H1 (cell line): ENCODE measurements at regions of chr15 and their contacts with region 1.

Region 1: DNA sequence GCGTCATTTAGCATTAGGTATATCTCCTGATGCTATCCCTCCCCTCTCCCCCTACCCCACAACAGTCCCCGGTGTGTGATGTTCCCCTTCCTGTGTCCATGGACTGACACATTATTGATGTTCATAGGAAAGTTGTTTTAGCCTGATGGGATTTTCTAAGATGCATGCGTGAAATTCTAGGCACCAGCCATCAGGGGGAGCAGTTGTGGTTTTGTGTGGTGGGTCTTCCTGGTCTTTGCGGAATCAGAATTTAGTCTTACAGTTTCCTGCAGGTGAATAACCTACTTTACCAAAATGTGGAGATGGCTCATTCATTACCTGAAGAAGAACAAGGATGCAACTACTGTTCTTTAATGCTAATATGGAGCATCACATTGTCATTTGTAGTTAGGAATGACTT is 455.0 kb upstream of the THBS1 start:
- DNase-seq: peak in 1 of 2 experiments; percentile 54
- H3K4me3 ChIP-seq: no peak overlapping the region
- H3K27ac ChIP-seq: no peak overlapping the region
- H3K4me1 ChIP-seq: peaks cover 0 to 6% (median 3%) of the 10 kb centered on the region in 4 experiments; a peak in 5 of 7 replicates
- H3K27me3 ChIP-seq: no peaks in the 10 kb centered on the region
- CTCF ChIP-seq: peak; percentile 53 to 81 (median 59)
- EP300 ChIP-seq: no peak
- POLR2A ChIP-seq: no peak
- RAD21 ChIP-seq: peak; percentile 75 to 78

Region 2: DNA sequence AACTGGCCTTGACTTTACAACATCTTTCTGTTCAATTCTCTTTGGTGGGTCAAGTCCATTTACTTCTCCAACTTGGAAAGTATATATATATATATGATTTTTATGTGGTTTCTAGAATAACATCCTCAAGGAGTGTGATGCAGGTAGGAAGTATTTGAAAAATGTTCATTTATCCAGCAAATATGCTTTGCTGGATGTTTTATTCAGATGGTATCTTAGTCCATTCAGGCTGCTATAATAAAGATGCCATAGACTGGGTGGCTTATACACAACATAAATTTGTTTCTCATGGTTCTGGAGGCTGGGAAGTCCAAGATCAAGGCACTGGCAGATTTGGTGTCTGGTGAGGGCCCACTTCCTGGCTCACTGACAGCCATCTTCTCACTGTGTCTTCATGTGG is 392.6 kb before region 1 on chr15:
- CTCF ChIA-PET with region 1: no interaction called
- POLR2A ChIA-PET with region 1: no interaction called
- DNase-seq: no peak
- H3K4me3 ChIP-seq: no peak overlapping the region
- H3K27ac ChIP-seq: no peak overlapping the region
- H3K4me1 ChIP-seq: no peaks in the 10 kb centered on the region
- H3K27me3 ChIP-seq: no peaks in the 10 kb centered on the region
- CTCF ChIP-seq: no peak
- EP300 ChIP-seq: no peak
- POLR2A ChIP-seq: no peak
- RAD21 ChIP-seq: no peak

Region 3: GRCh38 chr15:38905634-38906033 is 220.3 kb before region 1 on chr15:
- CTCF ChIA-PET with region 1: no interaction called
- POLR2A ChIA-PET with region 1: no interaction called
- DNase-seq: no peak
- H3K4me3 ChIP-seq: no peak overlapping the region
- H3K27ac ChIP-seq: no peak overlapping the region
- H3K4me1 ChIP-seq: no peaks in the 10 kb centered on the region; a peak in 1 of 7 replicates
- H3K27me3 ChIP-seq: no peaks in the 10 kb centered on the region
- CTCF ChIP-seq: no peak
- EP300 ChIP-seq: no peak
- POLR2A ChIP-seq: no peak
- RAD21 ChIP-seq: no peak

Region 4: GRCh38 chr15:39140060-39140604 is 14.2 kb after region 1 on chr15:
- CTCF ChIA-PET with region 1: interaction called, 12 read pairs
- POLR2A ChIA-PET with region 1: interaction called, 3 read pairs
- DNase-seq: no peak
- H3K4me3 ChIP-seq: no peak overlapping the region
- H3K27ac ChIP-seq: no peak overlapping the region
- H3K4me1 ChIP-seq: no peaks in the 10 kb centered on the region
- H3K27me3 ChIP-seq: no peaks in the 10 kb centered on the region
- CTCF ChIP-seq: no peak
- EP300 ChIP-seq: no peak
- POLR2A ChIP-seq: no peak
- RAD21 ChIP-seq: no peak

Region 5: GRCh38 chr15:39154227-39154638 is 28.3 kb after region 1 on chr15:
- CTCF ChIA-PET with region 1: interaction called, 10 read pairs
- POLR2A ChIA-PET with region 1: no interaction called
- DNase-seq: no peak
- H3K4me3 ChIP-seq: no peak overlapping the region
- H3K27ac ChIP-seq: no peak overlapping the region
- H3K4me1 ChIP-seq: peaks cover 0 to 3% (median 0%) of the 10 kb centered on the region in 4 experiments; a peak in 1 of 7 replicates
- H3K27me3 ChIP-seq: no peaks in the 10 kb centered on the region
- CTCF ChIP-seq: peak in 1 of 3 experiments; percentile 32; a peak in 1 of 4 replicates
- EP300 ChIP-seq: no peak
- POLR2A ChIP-seq: no peak
- RAD21 ChIP-seq: peak in 1 of 2 experiments; percentile 24; a peak in 1 of 4 replicates